Activated CD4-positive, alpha-beta memory T cell treated with anti-CD3 and anti-CD28 coated beads for 36 hours (primary cell): ENCODE measurements at regions of chr5 and their contacts with region 1.

Region 1: GRCh38 chr5:159304961-159305595 is 25.2 kb downstream of the IL12B start:
- DNase-seq: no peak
- H3K4me3 Mint-ChIP-seq: no peak overlapping the region
- H3K27ac Mint-ChIP-seq: no peak overlapping the region
- H3K4me1 Mint-ChIP-seq: no peaks in the 10 kb centered on the region
- H3K27me3 Mint-ChIP-seq: peaks cover 11% of the 10 kb centered on the region

Region 2: DNA sequence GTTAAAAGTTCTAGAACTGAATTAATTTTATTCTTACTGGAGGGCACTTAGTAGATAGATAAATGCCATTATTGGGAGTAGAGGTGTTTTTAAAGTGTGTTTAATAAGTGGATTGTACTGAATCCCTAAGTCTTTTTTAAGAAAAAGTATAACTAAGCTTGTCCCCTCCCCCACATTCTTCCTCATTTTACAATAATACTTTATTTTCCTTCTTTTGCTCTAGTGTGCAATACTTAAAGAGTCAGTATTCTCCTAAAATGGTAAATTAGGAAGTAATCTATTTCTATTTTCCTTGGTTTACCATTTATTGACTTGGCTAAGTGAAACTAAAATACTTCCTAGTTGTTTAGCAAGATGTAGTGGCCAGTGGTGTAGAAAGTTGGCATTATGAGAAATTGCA is 30.4 kb before region 1 on chr5:
- CTCF ChIA-PET with region 1: no interaction called
- POLR2A ChIA-PET with region 1: no interaction called
- intact Hi-C with region 1: no loop called
- DNase-seq: no peak
- H3K4me3 Mint-ChIP-seq: no peak overlapping the region
- H3K27ac Mint-ChIP-seq: no peak overlapping the region
- H3K4me1 Mint-ChIP-seq: peaks cover 10% of the 10 kb centered on the region
- H3K27me3 Mint-ChIP-seq: no peaks in the 10 kb centered on the region

Region 3: DNA sequence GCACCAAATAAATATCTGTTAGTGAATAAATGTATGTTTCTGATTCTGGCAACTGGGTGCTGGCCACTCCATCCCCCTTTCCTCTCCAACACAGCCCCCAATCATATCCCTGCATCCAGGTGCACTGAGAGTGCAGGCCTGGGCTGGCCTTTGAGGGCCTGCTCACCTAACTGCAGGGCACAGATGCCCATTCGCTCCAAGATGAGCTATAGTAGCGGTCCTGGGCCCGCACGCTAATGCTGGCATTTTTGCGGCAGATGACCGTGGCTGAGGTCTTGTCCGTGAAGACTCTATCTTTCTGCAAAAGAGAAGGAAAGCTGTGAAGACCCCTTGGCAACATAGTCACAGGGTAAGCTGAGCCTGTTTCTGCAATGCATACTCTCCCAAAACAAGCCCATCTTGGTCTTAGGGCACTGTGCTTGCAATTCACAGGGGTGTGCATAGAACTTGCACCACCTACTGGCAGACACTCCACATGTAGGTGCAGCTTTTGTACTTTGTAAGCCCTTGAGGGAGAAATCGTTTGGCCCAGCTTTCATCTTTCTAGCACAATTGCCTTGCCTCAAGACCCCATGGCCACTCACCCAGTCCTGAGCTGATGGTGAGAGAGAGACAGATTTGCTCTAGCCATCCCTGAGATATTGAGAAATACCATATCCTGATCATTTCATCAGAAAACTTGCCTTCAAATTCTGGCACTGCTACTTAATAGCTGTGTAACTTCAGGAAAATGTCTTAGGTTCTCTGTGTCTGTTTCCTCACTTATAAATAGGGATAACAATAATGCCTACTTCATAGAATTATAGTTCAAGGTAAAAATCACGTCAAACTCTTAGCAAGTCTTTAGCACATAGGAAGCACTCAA is 11.7 kb after region 1 on chr5:
- CTCF ChIA-PET with region 1: interaction called, 13 read pairs
- POLR2A ChIA-PET with region 1: no interaction called
- intact Hi-C with region 1: loop called (anchors 1 kb)
- DNase-seq: peak; percentile 58
- H3K4me3 Mint-ChIP-seq: no peak overlapping the region
- H3K27ac Mint-ChIP-seq: no peak overlapping the region
- H3K4me1 Mint-ChIP-seq: no peaks in the 10 kb centered on the region
- H3K27me3 Mint-ChIP-seq: no peaks in the 10 kb centered on the region